Activated CD4-positive, alpha-beta T cell treated with anti-CD3 and anti-CD28 coated beads, Interleukin-2, amount 10 ng/mL, durations not matched to agents 24 days and 14 days (primary cell): ENCODE measurements at regions of chr4 and their contacts with region 1.

Region 1: GRCh38 chr4:2262143-2262943 is 434 bp upstream of the MXD4 start:
- DNase-seq: peak; percentile 99
- H3K4me3 Mint-ChIP-seq: peak overlapping the region; percentile 76
- H3K27ac Mint-ChIP-seq: peak overlapping the region; percentile 82
- H3K4me1 Mint-ChIP-seq: no peaks in the 10 kb centered on the region
- H3K27me3 Mint-ChIP-seq: no peaks in the 10 kb centered on the region

Region 2: DNA sequence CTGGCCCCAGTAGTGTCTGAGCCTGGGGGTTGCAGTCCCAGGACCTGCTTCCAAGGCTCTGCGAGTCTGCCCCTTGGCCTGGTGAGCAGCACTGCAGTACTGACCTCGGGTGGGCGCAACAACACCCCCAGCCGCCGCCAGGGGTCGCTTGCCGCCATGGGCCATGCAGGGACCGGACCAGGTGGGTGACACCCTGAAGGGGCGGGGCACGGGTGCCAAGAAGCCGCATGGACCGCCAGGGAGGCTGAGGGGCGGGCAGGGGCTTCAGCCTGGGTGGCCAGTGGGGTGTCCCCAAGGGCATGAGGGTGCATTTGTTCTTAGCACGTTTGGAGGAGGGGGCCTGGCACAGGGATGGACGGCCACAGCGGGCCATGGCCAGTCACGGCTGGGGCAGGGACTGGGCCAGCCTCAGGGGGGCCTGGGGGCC is 516.1 kb before region 1 on chr4:
- intact Hi-C with region 1: no loop called
- DNase-seq: peak; percentile 94
- H3K4me3 Mint-ChIP-seq: no peak overlapping the region
- H3K27ac Mint-ChIP-seq: no peak overlapping the region
- H3K4me1 Mint-ChIP-seq: no peaks in the 10 kb centered on the region
- H3K27me3 Mint-ChIP-seq: no peaks in the 10 kb centered on the region

Region 3: DNA sequence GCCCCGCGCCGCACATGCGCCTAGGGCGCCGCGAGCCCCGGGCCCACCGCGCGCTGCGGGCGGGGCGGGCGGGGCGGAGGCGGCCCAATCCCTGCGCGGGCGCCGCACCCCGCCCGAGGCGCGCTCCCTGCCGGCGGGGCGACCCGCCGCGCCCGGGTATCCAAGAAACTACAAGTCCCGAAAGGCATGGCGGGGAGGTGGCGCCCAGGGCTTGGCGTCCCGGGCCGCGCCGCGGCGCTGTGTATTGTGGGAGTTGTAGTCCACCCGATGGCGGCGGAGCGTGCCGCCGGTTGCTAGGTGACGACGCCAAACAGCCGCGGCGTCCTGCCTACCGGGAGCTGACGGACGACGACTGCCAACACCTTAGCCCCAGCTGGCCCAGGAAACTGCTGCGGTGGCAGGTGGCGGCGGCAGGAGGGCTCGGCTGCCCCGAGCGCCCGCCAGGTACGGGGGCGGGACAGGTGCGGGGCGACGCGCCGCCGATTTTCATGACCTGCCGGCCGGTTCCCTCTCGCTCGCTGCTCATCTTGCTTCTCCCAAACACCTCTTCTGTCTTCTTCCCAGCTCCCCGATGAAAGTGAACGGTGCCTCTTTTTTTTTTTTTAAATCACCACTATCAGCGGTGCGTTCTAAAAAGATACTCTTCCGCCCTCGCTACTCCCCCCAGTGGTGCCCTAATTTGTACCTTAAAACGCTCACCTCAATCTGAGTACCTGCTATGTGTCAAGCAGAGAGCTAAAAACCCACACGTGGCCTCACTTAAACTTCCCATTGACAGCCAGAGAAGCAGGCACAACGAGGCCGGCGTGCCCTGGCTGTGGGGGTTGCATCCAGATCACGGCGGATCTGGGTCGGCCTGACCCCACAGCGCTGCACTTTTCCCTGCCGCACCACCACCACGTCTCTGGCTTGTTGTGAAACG is 156.6 kb after region 1 on chr4 and contains the start of gene CFAP99:
- intact Hi-C with region 1: loop called (anchors 1 kb)
- DNase-seq: peak; percentile 98
- H3K4me3 Mint-ChIP-seq: peak within 1 kb of the TSS; percentile 91
- H3K27ac Mint-ChIP-seq: peak within 1 kb of the TSS; percentile 86
- H3K4me1 Mint-ChIP-seq: peaks cover 35% of the 10 kb centered on the region
- H3K27me3 Mint-ChIP-seq: peaks cover 59% of the 10 kb centered on the region
- total RNA-seq, gene CFAP99: not detected in 2 replicates